ENCODE measurements at regions of chr5 and their contacts with region 1.

Region 1: GRCh38 chr5:99104538-99105132 is 175.8 kb upstream of the CHD1 start:
- DNase-seq: peak; percentile 65
- ATAC-seq: peak; percentile 38; the same call in 1 of the 2 replicates
- H3K4me3 ChIP-seq: no peak overlapping the region
- H3K27ac ChIP-seq: no peak overlapping the region
- H3K4me1 ChIP-seq: no peaks in the 10 kb centered on the region
- H3K27me3 ChIP-seq: peaks cover 31% of the 10 kb centered on the region
- CTCF ChIP-seq: peak; percentile 69; the same call in 1 of the 2 replicates

Region 2: GRCh38 chr5:99156688-99157087 is 52.1 kb after region 1 on chr5:
- CTCF ChIA-PET with region 1: interaction called, 12 read pairs
- POLR2A ChIA-PET with region 1: no interaction called
- intact Hi-C with region 1: loop called (anchors 2 kb)
- DNase-seq: no peak
- ATAC-seq: no peak
- H3K4me3 ChIP-seq: no peak overlapping the region
- H3K27ac ChIP-seq: no peak overlapping the region
- H3K4me1 ChIP-seq: no peaks in the 10 kb centered on the region
- H3K27me3 ChIP-seq: peaks cover 6% of the 10 kb centered on the region; the same call in 1 of the 2 replicates
- CTCF ChIP-seq: no peak

Region 3: GRCh38 chr5:99438666-99439301 is 334.1 kb after region 1 on chr5:
- CTCF ChIA-PET with region 1: no interaction called
- POLR2A ChIA-PET with region 1: no interaction called
- intact Hi-C with region 1: no loop called
- DNase-seq: no peak
- ATAC-seq: no peak
- H3K4me3 ChIP-seq: no peak overlapping the region
- H3K27ac ChIP-seq: no peak overlapping the region
- H3K4me1 ChIP-seq: 0 out of 2 replicates have a peak, but pooled peaks cover 5% of the 10 kb centered on the region
- H3K27me3 ChIP-seq: no peaks in the 10 kb centered on the region
- CTCF ChIP-seq: no peak

Region 4: GRCh38 chr5:99721506-99721905 is 616.9 kb after region 1 on chr5:
- CTCF ChIA-PET with region 1: interaction called, 17 read pairs
- POLR2A ChIA-PET with region 1: no interaction called
- intact Hi-C with region 1: no loop called
- DNase-seq: peak; percentile 75
- ATAC-seq: peak; percentile 98
- H3K4me3 ChIP-seq: no peak overlapping the region
- H3K27ac ChIP-seq: no peak overlapping the region
- H3K4me1 ChIP-seq: peaks cover 14% of the 10 kb centered on the region
- H3K27me3 ChIP-seq: no peaks in the 10 kb centered on the region
- CTCF ChIP-seq: no peak

Region 5: DNA sequence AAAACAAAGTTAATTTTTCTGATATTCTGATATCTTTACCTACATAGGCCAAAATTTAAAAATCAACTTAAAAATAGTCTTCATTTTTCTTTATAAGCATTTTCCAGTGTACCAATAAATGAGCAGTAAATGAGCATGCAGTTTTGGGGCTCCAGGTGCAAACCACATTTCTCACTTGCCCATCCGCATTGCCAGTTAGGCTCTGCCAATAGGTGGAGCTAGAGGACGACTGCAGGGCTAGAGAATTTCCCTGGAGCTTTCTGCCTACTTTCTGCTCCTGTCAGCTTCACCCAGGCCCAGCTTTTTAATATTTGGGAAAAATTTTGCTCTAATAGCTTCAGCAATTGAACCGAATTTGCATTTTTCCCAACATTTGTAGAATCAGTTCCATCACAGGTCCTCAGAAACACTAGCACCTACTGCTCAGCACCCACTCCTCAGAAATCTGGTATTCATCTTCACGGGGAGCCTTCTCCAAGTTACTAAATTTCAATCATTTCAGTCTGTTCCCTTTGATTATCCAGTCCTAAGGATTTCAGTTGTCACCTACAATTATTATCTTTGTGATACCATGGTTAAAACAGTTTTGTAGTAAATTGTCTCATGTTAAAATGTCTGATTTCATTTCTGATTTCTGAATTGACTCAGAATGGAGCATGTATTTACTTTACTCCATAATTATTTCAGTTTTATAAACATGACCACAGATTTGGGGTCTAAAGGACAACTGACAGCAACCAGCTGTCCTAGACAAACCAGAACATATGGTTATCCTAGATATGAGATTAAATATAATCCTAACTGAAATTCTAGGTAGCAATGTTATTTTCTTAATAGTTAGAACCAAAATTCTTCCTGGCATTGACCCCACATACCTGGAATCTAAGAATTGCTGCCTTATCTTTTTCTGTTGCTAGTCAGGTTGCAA is 1325.9 kb after region 1 on chr5:
- CTCF ChIA-PET with region 1: no interaction called
- POLR2A ChIA-PET with region 1: no interaction called
- intact Hi-C with region 1: loop called (anchors 2 kb)
- DNase-seq: peak; percentile 71
- ATAC-seq: peak; percentile 75
- H3K4me3 ChIP-seq: no peak overlapping the region
- H3K27ac ChIP-seq: no peak overlapping the region
- H3K4me1 ChIP-seq: no peaks in the 10 kb centered on the region
- H3K27me3 ChIP-seq: no peaks in the 10 kb centered on the region
- CTCF ChIP-seq: peak; percentile 95